Mammary epithelial cell (primary cell): ENCODE measurements at regions of chr3 and their contacts with region 1.

Region 1: GRCh38 chr3:45218578-45219390 is 7.3 kb downstream of the TMEM158 start:
- DNase-seq: peak; percentile 64
- H3K4me3 ChIP-seq: no peak overlapping the region
- H3K27ac ChIP-seq: no peak overlapping the region
- H3K4me1 ChIP-seq: peaks cover 22% of the 10 kb centered on the region
- H3K27me3 ChIP-seq: no peaks in the 10 kb centered on the region
- CTCF ChIP-seq: no peak

Region 2: DNA sequence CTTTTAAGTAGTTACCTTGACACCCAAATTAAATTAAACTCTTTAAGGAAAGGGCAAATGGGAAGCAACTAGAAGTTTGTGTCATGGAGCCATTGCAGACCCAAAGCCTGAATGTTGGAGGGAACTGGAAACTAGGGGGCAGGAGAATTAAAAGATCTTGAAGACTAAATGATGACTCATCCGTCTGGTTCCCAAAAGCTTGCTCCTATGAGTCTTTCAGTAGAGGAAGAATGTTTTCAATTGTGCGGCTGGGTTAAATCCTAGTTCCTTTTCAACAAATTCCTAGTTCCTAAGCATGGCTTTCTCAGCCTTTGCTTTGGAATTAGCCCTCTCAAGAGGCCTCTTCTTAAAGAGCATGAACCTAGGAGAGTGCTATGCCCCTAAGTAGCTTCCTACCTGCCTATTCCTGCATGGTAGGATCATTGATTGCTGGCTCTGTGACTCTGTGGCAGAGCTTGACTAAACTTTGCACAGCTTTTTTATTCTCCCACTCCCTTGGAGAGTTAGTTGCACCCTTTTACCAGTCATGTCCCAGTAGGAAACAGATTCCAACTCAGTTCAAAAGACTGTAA is 175.0 kb before region 1 on chr3:
- CTCF ChIA-PET with region 1: no interaction called
- dilution Hi-C with region 1: loop called (anchors 5 kb)
- in situ Hi-C with region 1: loop called in 1 of 2 experiments (anchors 5 kb)
- intact Hi-C with region 1: no loop called
- DNase-seq: peak; percentile 68
- H3K4me3 ChIP-seq: no peak overlapping the region
- H3K27ac ChIP-seq: no peak overlapping the region
- H3K4me1 ChIP-seq: peaks cover 13% of the 10 kb centered on the region
- H3K27me3 ChIP-seq: no peaks in the 10 kb centered on the region
- CTCF ChIP-seq: peak in 1 of 2 donors; percentile 19

Region 3: DNA sequence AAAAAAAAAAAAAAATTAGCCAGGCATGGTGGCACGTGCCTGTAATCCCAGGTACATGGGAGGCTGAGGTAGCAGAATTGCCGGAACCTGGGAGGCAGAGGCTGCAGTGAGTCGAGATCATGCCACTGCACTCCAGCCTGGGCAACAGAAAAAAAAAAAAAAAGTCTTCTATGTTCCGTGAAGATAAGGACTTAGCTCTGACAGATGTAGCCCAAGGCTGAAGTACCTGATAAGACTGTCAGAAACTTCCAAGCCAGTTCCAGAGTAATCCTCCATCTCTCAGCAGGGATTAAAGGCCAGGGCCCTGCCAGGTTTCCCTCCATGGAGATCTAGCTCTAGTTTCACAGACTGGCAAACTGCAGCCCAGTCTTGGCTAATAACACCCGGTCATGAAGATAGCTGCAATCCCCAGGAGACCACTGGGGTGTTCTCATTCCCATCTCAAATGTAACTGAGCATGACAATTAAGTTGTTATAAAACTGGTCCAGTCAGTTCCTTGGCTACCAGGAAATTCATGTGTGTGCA is 81.1 kb before region 1 on chr3:
- CTCF ChIA-PET with region 1: no interaction called
- dilution Hi-C with region 1: loop called (anchors 5 kb)
- in situ Hi-C with region 1: no loop called
- intact Hi-C with region 1: no loop called
- DNase-seq: no peak
- H3K4me3 ChIP-seq: no peak overlapping the region
- H3K27ac ChIP-seq: peak overlapping the region; percentile 82
- H3K4me1 ChIP-seq: peaks cover 89% of the 10 kb centered on the region
- H3K27me3 ChIP-seq: no peaks in the 10 kb centered on the region
- CTCF ChIP-seq: no peak